Left cardiac atrium (tissue), 4 donors: ENCODE measurements at regions of chr19 and their contacts with region 1.

Region 1: DNA sequence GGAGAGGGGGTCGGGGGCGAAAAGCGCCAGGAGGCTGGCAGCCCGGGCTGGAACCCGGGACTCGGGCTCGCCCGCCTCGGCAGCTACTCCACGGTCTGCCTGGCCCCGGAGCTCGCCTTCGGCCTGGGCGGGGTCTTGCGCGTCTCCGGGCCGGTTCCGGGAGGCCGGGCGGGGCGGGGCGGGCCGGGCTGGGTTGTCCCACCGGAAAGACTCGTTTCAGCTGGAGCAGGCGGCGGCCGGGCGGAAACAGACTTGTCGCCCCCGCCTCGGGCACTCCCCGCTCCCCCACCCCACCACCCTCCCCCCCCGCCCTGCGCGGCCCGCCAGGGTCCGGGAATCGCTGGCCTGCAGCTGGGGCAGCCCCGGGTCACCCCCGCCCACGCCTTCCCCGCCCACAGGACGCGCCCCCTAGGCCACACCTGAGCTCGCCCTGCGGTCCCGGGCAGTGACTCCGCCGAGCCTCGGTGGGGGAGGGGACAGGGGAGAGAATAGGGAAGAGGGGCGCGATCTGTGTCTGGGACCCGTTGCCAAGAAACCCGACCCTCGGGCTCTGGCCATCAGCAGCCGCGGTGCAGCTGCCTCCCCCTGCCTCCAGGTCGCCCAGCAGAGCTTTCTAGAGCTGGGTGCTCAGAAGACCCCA is 109.4 kb downstream of the KCTD15 start:
- DNase-seq: peak; percentile 88
- ATAC-seq: peak; percentile 93 to 94

Region 2: GRCh38 chr19:33795370-33796163 is 110.5 kb before region 1 on chr19:
- intact Hi-C with region 1: loop called in 1 of 2 experiments (anchors 5 kb)
- DNase-seq: peak; percentile 90
- ATAC-seq: peak; percentile 75 to 85

Region 3: DNA sequence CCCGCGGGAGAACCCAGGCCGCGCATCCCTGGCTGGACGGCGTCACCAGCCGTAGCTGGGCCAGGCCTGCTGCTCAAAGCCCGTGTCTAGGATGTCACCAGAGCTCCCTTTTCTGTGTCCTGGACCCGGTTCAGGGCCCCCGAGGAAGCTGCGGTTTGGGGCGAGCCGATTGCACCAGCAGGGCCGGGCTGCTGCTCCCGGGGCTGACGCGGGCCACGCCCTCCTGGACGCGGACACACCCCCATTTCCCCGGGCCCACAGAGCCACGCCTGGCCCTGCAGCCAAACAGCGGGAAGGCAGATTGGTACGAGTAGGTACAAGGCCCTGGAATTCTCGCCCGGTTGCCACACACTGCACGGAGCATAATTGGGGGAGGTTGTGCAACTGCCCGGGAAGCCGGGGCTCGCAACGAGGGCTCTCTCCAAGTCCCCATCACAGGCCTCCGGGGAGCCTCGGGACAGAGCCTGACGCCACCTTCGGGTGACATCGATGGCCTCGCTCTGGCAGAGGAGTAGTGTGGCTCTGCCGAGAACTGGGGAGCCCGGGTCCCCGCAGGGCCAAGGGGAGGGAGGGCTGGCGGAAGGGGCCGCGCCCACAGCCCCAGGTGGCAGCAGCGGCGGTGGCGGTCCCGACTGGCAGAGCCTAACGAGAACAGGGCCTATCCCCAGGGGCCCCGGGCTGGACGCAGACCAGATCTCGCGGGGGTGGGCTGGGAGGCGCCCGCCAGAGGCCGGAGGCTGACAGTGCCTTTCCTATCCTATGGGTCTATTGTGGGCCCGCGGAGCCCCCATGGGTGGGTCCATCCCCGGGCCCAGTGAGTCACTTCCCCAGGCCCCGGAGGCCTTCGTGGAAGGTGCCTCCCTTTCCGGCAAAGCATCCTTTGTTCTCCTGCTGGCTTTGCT is 85.9 kb before region 1 on chr19:
- intact Hi-C with region 1: no loop called
- DNase-seq: peak; percentile 91
- ATAC-seq: peak; percentile 91 to 92

Region 4: DNA sequence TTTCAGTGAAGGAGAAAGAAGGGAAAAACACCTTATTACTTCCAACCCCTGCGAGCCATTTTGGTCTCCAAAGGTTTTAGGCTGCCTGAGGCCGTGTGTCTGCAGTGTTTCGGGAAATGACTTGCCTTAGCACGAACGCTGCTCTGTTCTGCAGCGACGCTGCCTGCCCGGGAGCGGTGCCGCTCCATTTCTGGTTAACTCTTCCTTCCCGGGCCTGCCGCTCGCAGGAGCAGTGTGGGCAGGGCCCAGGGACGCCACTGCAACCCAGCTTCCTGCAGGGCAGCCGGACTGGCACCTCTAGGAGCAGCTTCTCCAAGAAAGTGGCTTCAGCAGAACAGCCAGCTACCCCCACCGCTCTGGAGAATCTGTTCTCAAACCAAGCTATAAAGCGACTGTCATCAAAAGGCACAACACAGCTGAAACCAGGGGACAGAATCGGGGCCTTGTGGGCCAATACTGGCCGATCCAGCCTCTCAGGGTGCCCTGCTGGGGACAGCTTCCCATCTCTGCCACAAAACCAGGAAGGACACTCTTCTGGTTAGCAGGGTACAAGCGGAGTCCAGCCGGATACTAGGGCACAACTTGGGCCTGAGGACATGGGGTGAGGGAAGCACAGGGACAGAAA is 37.2 kb before region 1 on chr19:
- intact Hi-C with region 1: no loop called
- DNase-seq: peak; percentile 70
- ATAC-seq: peak; percentile 91